A549 (cell line): ENCODE measurements at regions of chr5 and their contacts with region 1.

Region 1: DNA sequence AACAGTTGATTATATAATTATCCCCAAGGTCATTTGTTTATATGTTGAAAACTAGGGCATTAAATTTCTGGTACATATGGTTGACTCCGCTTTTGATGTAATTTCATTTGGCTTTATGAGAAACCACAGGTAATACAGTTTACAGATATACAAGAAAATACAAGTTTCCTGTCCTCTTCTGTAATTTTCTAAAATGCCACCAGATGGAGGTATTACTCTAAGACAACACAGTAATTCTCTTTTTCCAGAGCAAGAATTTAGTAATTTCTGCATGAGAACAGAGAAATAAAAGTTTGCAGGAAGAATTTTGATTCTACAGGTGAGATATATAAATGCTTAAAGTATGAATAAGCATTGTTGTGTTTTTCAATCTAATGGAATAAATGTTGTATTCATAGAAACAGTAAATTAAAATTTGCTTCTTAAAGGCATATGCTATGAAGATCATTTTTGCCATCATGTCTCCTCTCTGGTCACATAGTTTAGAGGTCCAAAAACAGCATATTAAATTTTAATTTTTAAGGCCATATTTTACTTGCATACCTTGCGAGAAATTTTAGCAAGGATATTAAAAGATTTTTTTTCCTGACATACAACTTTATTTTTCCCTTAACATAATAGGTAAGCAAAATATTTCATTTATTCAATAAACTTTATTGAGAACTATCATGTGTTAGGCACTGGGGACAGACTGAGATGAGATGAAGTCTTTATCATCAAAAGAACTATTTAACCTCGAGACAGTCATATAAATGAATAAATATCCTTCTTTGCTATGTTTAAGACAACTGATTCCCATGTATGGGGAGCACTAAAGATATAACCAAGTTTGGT is 22.7 kb downstream of the CHD1 start:
- DNase-seq: peak in 1 of 2 experiments; percentile 48
- ATAC-seq: peak; percentile 66 to 67; a peak in 3 of 6 replicates
- H3K4me3 ChIP-seq: no peak overlapping the region
- H3K27ac ChIP-seq: no peak overlapping the region
- H3K4me1 ChIP-seq: peaks cover 24% of the 10 kb centered on the region
- CTCF ChIP-seq: peak; percentile 76
- EP300 ChIP-seq: no peak
- POLR2A ChIP-seq: no peak
- RAD21 ChIP-seq: peak; percentile 75 to 82

Region 2: GRCh38 chr5:98891591-98891990 is 14.5 kb before region 1 on chr5:
- CTCF ChIA-PET with region 1: no interaction called
- POLR2A ChIA-PET with region 1: no interaction called
- DNase-seq: no peak
- ATAC-seq: no peak
- H3K4me3 ChIP-seq: no peak overlapping the region
- H3K27ac ChIP-seq: no peak overlapping the region
- H3K4me1 ChIP-seq: no peaks in the 10 kb centered on the region
- CTCF ChIP-seq: no peak
- EP300 ChIP-seq: no peak
- POLR2A ChIP-seq: no peak
- RAD21 ChIP-seq: no peak

Region 3: GRCh38 chr5:98928873-98929696 is 23.0 kb after region 1 on chr5 and contains the start of gene CHD1:
- CTCF ChIA-PET with region 1: no interaction called
- POLR2A ChIA-PET with region 1: interaction called, 10 read pairs
- DNase-seq: peak; percentile 92 to 97
- ATAC-seq: peak; percentile 78 to 82
- H3K4me3 ChIP-seq: peak within 1 kb of the TSS; percentile 79
- H3K27ac ChIP-seq: peak within 1 kb of the TSS; percentile 96 to 98
- H3K4me1 ChIP-seq: peaks cover 27% of the 10 kb centered on the region
- CTCF ChIP-seq: no peak
- EP300 ChIP-seq: peak in 1 of 2 experiments; percentile 39; a peak in 1 of 5 replicates
- POLR2A ChIP-seq: peak; percentile 68
- RAD21 ChIP-seq: no peak
- polyA plus RNA-seq, gene CHD1: 43.2 and 53.9 TPM in 2 replicates

Region 4: GRCh38 chr5:99060306-99061261 is 154.5 kb after region 1 on chr5:
- CTCF ChIA-PET with region 1: interaction called, 12 read pairs
- POLR2A ChIA-PET with region 1: no interaction called
- DNase-seq: peak; percentile 60 to 63
- ATAC-seq: peak; percentile 67 to 83; a peak in 5 of 6 replicates
- H3K4me3 ChIP-seq: no peak overlapping the region
- H3K27ac ChIP-seq: no peak overlapping the region
- H3K4me1 ChIP-seq: 0 out of 3 replicates have a peak, but pooled peaks cover 4% of the 10 kb centered on the region
- CTCF ChIP-seq: peak; percentile 90
- EP300 ChIP-seq: no peak
- POLR2A ChIP-seq: no peak
- RAD21 ChIP-seq: peak; percentile 80 to 81